Activated CD8-positive, alpha-beta T cell treated with anti-CD3 and anti-CD28 coated beads for 36 hours (primary cell): ENCODE measurements at regions of chr17 and their contacts with region 1.

Region 1: DNA sequence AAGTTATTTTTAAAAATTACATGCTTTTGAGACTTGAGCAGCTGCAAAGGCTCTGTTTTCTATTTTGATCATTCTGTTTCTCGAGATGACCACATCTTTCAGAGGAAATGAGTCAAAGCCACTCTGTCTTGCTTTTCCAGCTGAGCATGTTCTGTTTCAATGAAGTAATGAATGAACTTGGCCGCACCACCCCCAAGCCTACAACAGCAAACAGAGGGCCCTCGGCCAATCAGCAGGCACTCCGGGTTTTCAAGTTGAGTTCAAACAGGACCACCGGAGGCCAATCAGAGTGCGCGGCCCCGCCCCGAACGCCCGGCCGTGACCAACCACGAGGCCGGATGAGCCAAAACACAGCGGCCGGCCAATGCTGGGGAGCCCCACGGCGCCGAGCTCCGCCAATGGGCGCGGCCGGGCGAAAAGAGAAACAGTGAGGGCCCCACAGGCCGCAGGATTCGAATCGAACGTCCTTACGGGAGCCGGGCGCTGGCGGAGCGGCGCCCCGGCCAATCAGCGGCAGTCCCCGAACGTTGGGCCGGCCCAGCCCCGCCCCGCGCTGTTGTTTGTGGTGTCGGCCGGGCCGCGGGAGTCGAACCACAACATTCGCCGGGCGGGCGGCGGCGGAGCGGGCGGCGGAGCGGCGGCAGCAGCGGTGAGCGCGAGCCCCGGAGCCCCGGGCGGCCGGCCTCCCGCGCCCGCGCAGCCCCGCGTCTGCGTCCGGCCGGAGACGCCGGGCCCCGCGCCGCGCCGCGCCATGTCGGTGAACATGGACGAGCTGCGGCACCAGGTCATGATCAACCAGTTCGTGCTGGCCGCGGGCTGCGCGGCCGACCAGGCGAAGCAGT is at the start of gene UBALD2:
- DNase-seq: peak; percentile 100
- ATAC-seq: peak; percentile 81
- H3K4me3 Mint-ChIP-seq: peak within 1 kb of the TSS; percentile 96
- H3K27ac Mint-ChIP-seq: peak within 1 kb of the TSS; percentile 99
- H3K4me1 Mint-ChIP-seq: peaks cover 44% of the 10 kb centered on the region
- H3K27me3 Mint-ChIP-seq: no peaks in the 10 kb centered on the region
- CTCF ChIP-seq: no peak
- total RNA-seq, gene UBALD2: 267 to 270 TPM

Region 2: DNA sequence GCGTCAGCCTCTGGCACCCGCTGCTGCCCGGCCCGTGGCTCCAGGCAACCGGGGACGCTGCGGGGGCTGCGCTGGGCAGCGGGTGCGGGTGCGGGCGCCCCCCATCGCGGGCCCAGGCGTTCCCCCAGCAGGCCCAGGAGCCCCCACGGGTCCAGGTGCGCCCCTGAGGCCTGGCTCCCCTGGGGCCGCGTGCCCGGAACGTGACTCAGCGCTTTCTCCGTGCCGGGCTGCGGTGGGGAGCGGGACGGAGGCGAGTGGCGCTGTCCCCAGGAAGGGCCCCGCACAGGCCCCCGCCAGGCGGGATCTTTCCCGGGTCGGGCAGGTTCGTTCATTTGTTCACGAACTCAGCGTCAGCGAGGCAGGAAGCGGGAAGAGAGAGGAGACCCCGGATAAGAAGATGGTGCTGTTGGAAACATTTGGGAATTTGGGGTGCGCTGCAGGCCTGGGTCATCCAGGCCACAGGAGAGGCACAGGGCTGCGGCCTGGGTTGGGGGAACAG is 143.0 kb before region 1 on chr17:
- CTCF ChIA-PET with region 1: interaction called, 9 read pairs
- POLR2A ChIA-PET with region 1: interaction called, 83 read pairs
- intact Hi-C with region 1: no loop called
- DNase-seq: peak; percentile 40
- ATAC-seq: peak; percentile 10
- H3K4me3 Mint-ChIP-seq: peak overlapping the region; percentile 45
- H3K27ac Mint-ChIP-seq: peak overlapping the region; percentile 77
- H3K4me1 Mint-ChIP-seq: peaks cover 20% of the 10 kb centered on the region
- H3K27me3 Mint-ChIP-seq: no peaks in the 10 kb centered on the region
- CTCF ChIP-seq: no peak

Region 3: DNA sequence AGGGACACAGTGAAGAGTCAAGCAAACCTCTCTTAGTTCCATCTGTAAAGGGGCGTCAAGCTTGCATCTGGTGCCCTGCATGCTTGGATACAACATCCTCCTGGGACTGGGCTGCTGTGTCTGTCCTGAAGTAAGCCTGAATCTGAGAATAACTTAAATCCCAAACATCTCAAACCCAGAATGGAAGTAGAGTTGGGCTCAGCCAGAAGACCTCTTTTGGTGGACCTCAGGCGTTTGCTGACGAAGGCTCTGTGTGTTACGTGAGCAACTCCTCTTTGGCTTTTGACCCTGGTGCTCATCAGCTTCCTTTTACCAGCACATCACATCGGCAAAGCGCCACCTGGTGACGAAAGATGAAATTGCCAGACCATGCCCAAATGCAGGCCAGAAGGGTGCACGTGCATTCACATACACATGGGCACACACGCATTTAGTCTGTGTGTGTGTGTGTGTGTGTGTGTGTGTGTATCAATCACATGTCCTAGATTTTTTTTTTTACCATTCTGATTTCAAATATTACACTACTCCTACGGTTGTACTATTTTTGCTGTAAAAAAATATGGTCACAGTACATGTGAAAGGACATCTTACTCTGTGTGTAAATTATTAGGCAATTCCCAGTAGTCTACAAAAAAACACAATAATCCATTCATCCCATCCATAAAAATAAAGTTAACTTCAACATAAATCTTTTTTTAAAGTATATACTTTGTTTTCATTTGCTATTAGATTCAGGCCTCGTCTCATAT is 82.8 kb before region 1 on chr17:
- CTCF ChIA-PET with region 1: interaction called, 37 read pairs
- POLR2A ChIA-PET with region 1: interaction called, 700 read pairs
- intact Hi-C with region 1: no loop called
- DNase-seq: peak; percentile 99
- ATAC-seq: peak; percentile 80
- H3K4me3 Mint-ChIP-seq: peak overlapping the region; percentile 56
- H3K27ac Mint-ChIP-seq: peak overlapping the region; percentile 96
- H3K4me1 Mint-ChIP-seq: peaks cover 65% of the 10 kb centered on the region
- H3K27me3 Mint-ChIP-seq: no peaks in the 10 kb centered on the region
- CTCF ChIP-seq: peak; percentile 73

Region 4: DNA sequence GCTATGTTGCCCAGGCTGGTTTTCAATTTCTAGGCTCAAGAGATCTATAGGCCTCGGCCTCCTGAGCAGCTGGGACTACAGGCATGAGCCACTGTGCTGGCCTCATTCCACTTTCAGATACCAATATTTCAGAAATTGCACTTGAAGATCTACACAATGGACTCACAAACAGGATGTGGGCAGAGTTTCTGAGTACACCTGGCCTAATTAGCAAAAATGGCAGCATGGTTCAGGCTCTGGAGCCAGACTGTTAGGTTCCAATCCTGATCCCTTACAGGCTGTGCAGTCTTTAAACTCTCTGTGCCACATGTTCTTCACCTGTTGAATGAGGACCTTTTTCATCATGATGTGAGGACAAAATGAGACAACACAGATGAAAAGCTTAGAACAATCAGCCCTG is 56.9 kb before region 1 on chr17:
- CTCF ChIA-PET with region 1: no interaction called
- POLR2A ChIA-PET with region 1: interaction called, 14 read pairs
- intact Hi-C with region 1: no loop called
- DNase-seq: no peak
- ATAC-seq: peak; percentile 62
- H3K4me3 Mint-ChIP-seq: no peak overlapping the region
- H3K27ac Mint-ChIP-seq: peak overlapping the region; percentile 61
- H3K4me1 Mint-ChIP-seq: peaks cover 36% of the 10 kb centered on the region
- H3K27me3 Mint-ChIP-seq: no peaks in the 10 kb centered on the region
- CTCF ChIP-seq: no peak

Region 5: DNA sequence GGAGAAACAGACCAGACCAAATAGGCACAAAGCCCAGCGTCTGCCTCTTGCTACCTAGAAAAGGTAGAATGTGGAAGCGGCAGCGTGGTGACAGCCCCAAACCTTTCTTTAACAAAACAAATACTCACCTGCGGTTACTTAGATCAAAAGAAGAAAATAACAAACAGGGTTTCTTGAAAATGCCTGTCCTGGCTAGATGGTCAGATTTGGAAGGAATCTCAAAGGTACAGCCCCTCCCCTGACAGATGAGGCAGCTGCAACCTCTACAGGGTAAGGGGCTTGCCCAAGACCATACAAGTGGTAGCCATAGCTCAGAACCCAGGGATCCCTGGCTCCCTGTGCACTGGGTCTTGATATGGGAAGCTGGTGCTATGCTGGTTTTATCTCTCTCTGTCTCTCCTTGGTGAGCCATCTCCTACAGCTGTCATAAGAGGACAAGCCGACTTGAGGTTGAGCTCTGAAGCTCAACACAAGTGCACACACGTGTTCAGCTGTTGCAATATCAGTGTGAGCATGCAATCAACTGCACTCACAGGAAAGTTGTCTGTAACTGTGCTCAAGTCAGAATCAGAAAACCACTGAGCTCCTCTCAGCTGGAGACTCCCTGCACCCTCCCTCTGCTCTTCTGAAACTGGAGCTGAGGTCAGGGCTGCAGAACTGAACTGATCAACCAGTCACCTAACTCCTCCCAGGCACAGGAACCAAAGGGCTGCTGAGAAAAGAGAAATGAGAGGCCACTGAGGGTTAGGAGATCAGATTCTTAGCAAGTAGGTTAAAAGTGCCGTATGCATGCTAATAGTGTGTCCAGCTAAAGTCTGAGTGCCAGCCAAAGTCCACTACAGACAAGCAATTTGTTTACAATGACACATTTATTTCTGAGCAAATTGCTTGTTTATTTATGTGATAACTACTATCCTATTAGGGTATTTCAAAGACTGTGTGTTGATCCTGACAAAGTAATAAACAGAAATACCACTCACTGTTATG is 18.6 kb before region 1 on chr17:
- CTCF ChIA-PET with region 1: interaction called, 12 read pairs
- POLR2A ChIA-PET with region 1: interaction called, 960 read pairs
- intact Hi-C with region 1: no loop called
- DNase-seq: peak; percentile 86
- ATAC-seq: peak; percentile 98
- H3K4me3 Mint-ChIP-seq: peak overlapping the region; percentile 44
- H3K27ac Mint-ChIP-seq: peak overlapping the region; percentile 96
- H3K4me1 Mint-ChIP-seq: peaks cover 56% of the 10 kb centered on the region
- H3K27me3 Mint-ChIP-seq: no peaks in the 10 kb centered on the region
- CTCF ChIP-seq: no peak